Mucosa of descending colon (tissue), 3 donors: ENCODE measurements at regions of chr9 and their contacts with region 1.

Region 1: DNA sequence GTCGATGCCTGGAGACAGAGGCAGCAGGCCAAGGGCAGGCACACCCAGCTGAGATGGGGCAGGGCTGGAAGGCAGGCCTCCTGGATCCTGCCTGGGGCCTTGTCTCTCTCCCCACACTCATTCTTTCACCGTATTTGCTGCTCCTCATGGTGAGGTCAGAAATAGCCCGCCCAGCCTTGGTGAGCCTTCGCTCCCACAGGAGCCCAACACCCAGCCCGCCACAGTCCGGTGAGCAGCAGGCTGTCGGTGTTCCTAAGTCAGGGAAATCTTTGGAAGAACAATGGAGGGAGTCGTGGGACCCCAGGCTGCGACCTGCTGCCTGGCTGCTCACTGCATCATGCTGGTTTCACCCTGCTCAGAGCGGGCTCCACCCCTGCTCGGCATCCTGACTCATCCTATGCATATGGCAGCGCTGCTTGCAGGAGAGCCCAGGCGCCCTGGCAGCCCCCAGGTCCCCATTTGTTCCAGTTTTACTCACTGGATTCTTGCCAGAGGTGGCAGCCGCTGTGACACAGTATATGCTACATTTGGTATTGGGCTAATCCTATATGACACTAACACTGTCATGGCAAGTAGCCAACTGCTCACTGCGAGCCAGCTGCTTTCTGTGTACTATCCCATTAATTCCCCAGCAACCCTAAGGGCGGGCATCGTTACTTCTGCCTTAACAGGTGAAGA is 53.2 kb upstream of the NCS1 start:
- DNase-seq: no peak
- ATAC-seq: peak; percentile 9
- H3K4me3 ChIP-seq: no peak overlapping the region
- H3K4me1 ChIP-seq: no peaks in the 10 kb centered on the region
- CTCF ChIP-seq: no peak

Region 2: GRCh38 chr9:130172161-130172857 is 53.3 kb after region 1 on chr9 and contains the start of gene NCS1:
- intact Hi-C with region 1: loop called in 1 of 2 experiments (anchors 10 kb)
- DNase-seq: peak; percentile 69 to 83 (median 73)
- ATAC-seq: peak; percentile 81
- H3K4me3 ChIP-seq: no peak within 1 kb of the TSS
- H3K4me1 ChIP-seq: peaks cover 3% of the 10 kb centered on the region
- CTCF ChIP-seq: no peak
- total RNA-seq, gene NCS1: 4.1 to 196 (median 10.7) TPM

Region 3: DNA sequence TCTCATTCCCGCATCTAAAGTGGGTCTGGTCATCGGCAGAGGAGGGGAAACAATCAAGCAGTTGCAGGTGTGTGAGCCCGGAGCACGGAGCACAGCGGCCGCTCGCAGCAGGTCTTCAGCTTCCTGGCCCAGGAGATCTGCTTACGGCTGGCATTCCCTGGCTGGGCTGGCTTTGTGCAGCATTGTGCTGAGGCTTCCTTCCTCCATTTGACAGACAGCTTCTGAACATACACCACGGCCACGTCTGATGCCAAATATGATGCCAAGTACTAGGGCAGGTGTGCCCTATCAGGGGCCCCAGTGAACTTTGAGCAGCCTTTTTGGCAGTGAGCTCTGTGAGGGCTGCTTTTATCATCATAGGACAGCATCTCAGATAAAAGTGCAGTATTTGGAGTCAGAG is 497.5 kb after region 1 on chr9:
- intact Hi-C with region 1: no loop called
- DNase-seq: no peak
- ATAC-seq: no peak
- H3K4me3 ChIP-seq: no peak overlapping the region
- H3K4me1 ChIP-seq: no peaks in the 10 kb centered on the region
- CTCF ChIP-seq: no peak